ENCODE measurements at regions of chr21 and their contacts with region 1.

Region 1: DNA sequence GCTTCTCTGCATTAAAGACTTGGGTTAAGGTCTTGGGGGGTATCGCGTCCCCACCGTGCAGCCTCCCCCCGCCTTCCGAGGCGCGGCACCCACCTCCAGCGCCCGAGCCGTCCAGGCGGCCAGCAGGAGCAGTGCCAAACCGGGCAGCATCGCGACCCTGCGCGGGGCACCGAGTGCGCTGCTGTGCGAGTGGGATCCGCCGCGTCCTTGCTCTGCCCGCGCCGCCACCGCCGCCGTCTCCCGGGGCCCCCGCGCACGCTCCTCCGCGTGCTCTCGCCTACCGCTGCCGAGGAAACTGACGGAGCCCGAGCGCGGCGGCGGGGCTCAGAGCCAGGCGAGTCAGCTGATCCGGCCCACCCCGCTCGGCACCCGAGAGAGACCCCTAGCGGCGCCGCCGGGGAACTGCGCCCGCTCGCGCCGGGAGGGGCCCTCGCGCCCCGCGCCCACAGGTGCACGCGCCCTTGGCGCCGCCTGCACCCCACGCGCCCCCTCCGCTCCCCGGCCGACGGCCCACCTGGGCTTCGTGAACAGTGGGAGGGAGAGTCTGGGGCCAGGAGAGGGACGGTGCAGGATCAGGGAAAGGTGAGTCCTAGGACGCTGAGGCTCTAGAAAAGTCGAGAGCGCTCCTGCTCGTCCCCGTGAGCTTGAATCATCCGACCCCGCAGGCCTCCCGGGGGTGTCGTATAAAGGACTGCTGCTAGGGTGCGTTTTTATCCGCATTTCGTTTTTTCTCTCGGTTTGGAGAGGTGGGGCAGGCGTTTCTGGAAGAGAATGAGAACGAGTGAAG is at the start of gene APP:
- DNase-seq: peak; percentile 84 to 93 (median 91)
- ATAC-seq: peak; percentile 74 to 90 (median 82)
- H3K4me3 ChIP-seq: peak within 1 kb of the TSS; percentile 55 to 97 (median 81)
- H3K27ac ChIP-seq: peak within 1 kb of the TSS; percentile 75 to 96 (median 92)
- H3K4me1 ChIP-seq: peaks cover 0 to 42% (median 30%) of the 10 kb centered on the region in 12 donors
- H3K27me3 ChIP-seq: no peaks in the 10 kb centered on the region
- CTCF ChIP-seq: peak; percentile 73 to 100 (median 99)
- POLR2A ChIP-seq: peak in 1 of 2 donors; percentile 86
- total RNA-seq, gene APP: 271 to 467 (median 381) TPM

Region 2: DNA sequence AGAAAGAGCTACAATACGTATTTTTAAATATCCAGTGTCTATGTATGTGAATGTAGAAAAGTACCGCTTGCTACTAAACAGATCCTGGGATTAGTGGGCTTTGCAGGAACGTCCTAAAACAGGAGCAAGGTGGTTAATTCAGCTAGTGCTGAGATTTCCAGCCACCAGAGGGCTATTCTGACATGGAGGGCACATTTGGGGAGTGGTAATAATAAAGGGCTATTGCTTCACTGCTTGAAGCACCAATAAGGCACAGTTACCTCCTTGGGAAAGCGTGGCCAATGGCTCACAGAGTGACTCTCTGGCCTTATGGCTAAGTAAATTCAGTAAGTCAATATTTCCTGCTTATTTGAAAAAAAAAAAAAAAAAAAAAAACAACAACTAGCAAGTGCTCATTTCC is 283.5 kb before region 1 on chr21:
- intact Hi-C with region 1: loop called in 8 of 10 experiments (anchors 1 to 5 kb)
- DNase-seq: no peak
- ATAC-seq: no peak
- H3K4me3 ChIP-seq: no peak overlapping the region
- H3K27ac ChIP-seq: no peak overlapping the region
- H3K4me1 ChIP-seq: peaks cover 0 to 20% (median 4%) of the 10 kb centered on the region in 12 donors
- H3K27me3 ChIP-seq: no peaks in the 10 kb centered on the region
- CTCF ChIP-seq: peak in 1 of 12 donors; percentile 4
- POLR2A ChIP-seq: no peak

Region 3: DNA sequence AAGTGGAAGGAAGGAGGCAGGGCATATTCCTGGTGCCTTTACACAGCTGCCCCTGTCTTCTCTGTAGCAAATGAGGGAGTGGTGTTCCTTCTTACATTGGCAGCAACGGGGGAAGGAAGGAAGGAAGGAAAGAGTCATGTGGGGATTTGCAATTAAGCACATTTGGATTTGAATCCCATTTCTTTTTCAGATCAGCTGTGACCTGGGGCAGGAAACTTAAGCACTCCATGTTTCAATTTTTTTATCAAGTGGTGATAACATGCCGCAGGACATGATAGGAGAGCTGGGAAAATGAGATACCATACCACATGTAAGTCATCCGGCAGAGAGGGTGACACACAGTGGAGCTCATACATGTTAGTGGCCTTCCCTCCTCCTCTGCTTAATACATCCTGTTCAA is 186.9 kb before region 1 on chr21:
- intact Hi-C with region 1: loop called in 2 of 10 experiments (anchors 5 to 10 kb)
- DNase-seq: peak in 2 of 5 donors; percentile 30 to 33
- ATAC-seq: peak; percentile 80 to 91 (median 88)
- H3K4me3 ChIP-seq: no peak overlapping the region
- H3K27ac ChIP-seq: peak overlapping the region in 11 of 12 donors; percentile 5 to 55 (median 25)
- H3K4me1 ChIP-seq: peaks cover 0 to 35% (median 16%) of the 10 kb centered on the region in 12 donors
- H3K27me3 ChIP-seq: no peaks in the 10 kb centered on the region
- CTCF ChIP-seq: no peak
- POLR2A ChIP-seq: no peak

Region 4: GRCh38 chr21:26027696-26028095 is 143.0 kb before region 1 on chr21:
- intact Hi-C with region 1: loop called in 1 of 10 experiments (anchors 10 kb)
- DNase-seq: no peak
- ATAC-seq: no peak
- H3K4me3 ChIP-seq: no peak overlapping the region
- H3K27ac ChIP-seq: peak overlapping the region in 1 of 12 donors; percentile 38
- H3K4me1 ChIP-seq: peaks cover 0 to 34% (median 5%) of the 10 kb centered on the region in 12 donors
- H3K27me3 ChIP-seq: no peaks in the 10 kb centered on the region
- CTCF ChIP-seq: no peak
- POLR2A ChIP-seq: no peak

Region 5: GRCh38 chr21:26067836-26068594 is 102.6 kb before region 1 on chr21:
- intact Hi-C with region 1: loop called in 2 of 10 experiments (anchors 5 to 10 kb)
- DNase-seq: no peak
- ATAC-seq: peak in 3 of 4 donors; percentile 34 to 57 (median 36)
- H3K4me3 ChIP-seq: no peak overlapping the region
- H3K27ac ChIP-seq: no peak overlapping the region
- H3K4me1 ChIP-seq: peaks cover 2 to 50% (median 24%) of the 10 kb centered on the region in 12 donors
- H3K27me3 ChIP-seq: no peaks in the 10 kb centered on the region
- CTCF ChIP-seq: no peak
- POLR2A ChIP-seq: no peak

Region 6: DNA sequence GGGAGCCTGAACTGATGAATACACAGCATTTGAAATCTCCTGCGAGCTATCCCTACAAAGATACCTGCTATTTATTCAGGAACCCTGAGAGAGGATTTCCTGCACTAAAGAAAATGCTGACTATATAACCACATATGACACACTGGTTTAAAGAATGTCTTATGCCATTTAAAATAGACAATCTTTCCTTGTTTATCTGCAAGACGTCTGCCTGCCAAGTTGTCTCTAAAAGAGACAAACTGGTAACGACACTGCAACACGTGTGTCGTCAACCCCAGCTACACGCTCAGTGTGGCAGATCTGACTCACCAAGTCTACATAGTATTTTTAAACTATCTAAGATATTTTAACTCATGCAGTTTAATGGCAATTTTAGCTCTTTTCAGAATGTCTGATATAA is 42.7 kb before region 1 on chr21:
- intact Hi-C with region 1: loop called in 3 of 10 experiments (anchors 5 kb)
- DNase-seq: peak in 3 of 5 donors; percentile 22 to 54 (median 35)
- ATAC-seq: peak in 3 of 4 donors; percentile 60 to 82 (median 75)
- H3K4me3 ChIP-seq: peak overlapping the region in 7 of 12 donors; percentile 5 to 32 (median 22)
- H3K27ac ChIP-seq: peak overlapping the region in 10 of 12 donors; percentile 12 to 54 (median 45)
- H3K4me1 ChIP-seq: peaks cover 12 to 78% (median 61%) of the 10 kb centered on the region in 12 donors
- H3K27me3 ChIP-seq: no peaks in the 10 kb centered on the region
- CTCF ChIP-seq: no peak
- POLR2A ChIP-seq: no peak

Region 7: DNA sequence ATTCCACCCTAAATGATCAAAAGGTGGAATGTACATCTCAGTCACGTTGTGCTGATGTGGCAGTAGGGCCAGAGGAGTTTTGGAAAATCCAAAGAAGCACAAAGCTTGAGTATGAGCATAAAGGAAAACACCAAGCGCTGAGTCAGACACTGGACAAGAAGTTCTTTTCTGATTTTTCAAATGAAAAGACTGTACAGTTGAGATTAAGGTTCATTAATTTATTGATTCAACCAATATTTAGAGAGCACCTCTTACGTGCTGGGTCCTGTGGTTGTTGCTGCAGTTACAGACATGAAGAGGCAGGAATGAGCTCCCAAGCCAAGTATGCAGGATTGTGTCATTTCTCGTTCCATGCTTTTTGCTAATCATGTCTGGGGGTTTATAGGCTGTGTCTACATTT is 28.8 kb after region 1 on chr21:
- intact Hi-C with region 1: no loop called
- DNase-seq: no peak
- ATAC-seq: no peak
- H3K4me3 ChIP-seq: no peak overlapping the region
- H3K27ac ChIP-seq: no peak overlapping the region
- H3K4me1 ChIP-seq: no peaks in the 10 kb centered on the region
- H3K27me3 ChIP-seq: no peaks in the 10 kb centered on the region
- CTCF ChIP-seq: no peak
- POLR2A ChIP-seq: no peak

Region 8: GRCh38 chr21:26307640-26308039 is 137.0 kb after region 1 on chr21:
- intact Hi-C with region 1: no loop called
- DNase-seq: no peak
- ATAC-seq: no peak
- H3K4me3 ChIP-seq: no peak overlapping the region
- H3K27ac ChIP-seq: no peak overlapping the region
- H3K4me1 ChIP-seq: no peaks in the 10 kb centered on the region
- H3K27me3 ChIP-seq: no peaks in the 10 kb centered on the region
- CTCF ChIP-seq: no peak
- POLR2A ChIP-seq: no peak

Region 9: DNA sequence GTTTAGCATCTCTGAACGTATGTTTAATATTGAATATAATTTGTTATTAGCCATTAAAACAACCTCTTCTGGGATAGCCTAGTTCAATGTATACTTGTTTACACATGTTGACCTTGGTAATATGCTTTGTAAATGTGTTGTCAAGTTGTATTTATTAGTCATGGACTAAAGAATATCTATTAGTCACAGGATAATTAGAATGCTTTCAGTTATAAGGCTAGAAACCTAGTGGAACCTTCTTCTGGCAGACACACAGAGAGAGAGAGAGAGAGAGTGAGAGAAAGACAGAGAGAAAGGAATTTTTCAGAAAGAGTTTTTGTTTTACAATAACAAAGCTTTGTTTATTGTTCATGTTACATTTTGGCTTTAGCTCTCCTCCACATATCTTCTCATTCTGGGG is 181.0 kb after region 1 on chr21:
- intact Hi-C with region 1: no loop called
- DNase-seq: no peak
- ATAC-seq: no peak
- H3K4me3 ChIP-seq: no peak overlapping the region
- H3K27ac ChIP-seq: no peak overlapping the region
- H3K4me1 ChIP-seq: no peaks in the 10 kb centered on the region
- H3K27me3 ChIP-seq: no peaks in the 10 kb centered on the region
- CTCF ChIP-seq: no peak
- POLR2A ChIP-seq: no peak

Region 10: GRCh38 chr21:26715878-26716506 is 545.3 kb after region 1 on chr21:
- intact Hi-C with region 1: loop called in 5 of 10 experiments (anchors 5 to 10 kb)
- DNase-seq: peak in 3 of 5 donors; percentile 31 to 41 (median 32)
- ATAC-seq: peak; percentile 52 to 83 (median 62)
- H3K4me3 ChIP-seq: no peak overlapping the region
- H3K27ac ChIP-seq: no peak overlapping the region
- H3K4me1 ChIP-seq: peaks cover 0 to 8% (median 0%) of the 10 kb centered on the region in 12 donors
- H3K27me3 ChIP-seq: no peaks in the 10 kb centered on the region
- CTCF ChIP-seq: peak; percentile 71 to 89 (median 82)
- POLR2A ChIP-seq: no peak